Mammary epithelial cell (primary cell): ENCODE measurements at regions of chr2 and their contacts with region 1.

Region 1: DNA sequence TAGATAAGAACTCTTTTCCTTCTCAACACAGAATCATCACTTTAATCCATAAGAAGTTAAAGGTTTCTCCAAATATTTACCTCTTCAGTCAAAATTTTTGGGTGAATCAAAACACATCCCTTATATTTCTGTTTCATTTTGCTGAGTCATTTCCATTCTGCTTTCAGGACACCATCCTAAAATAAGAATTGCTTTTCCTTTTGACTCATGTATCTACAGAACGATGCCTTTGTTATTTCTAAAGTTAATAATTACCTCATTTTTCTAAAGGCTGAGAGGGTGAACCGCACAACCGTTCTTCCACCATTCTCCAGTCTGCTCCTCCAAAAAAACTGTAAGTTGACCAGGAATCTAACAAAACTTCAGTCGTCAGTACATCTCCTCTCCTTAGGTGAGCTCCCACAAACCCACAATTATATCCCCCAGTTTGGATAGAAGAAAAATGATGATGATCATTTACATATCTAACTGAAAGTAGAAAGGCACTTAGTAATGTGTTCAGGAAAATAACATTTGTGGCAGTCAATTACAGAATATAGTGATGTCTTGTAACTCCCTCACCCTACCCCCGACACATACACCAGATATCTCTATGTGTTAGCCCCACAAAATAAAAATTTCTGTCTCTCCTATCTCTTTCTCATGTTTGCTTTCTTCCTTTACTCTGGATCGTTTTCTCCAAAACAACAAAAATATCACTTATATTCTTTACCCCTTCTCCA is 162.5 kb downstream of the RAD51AP2 start:
- DNase-seq: no peak
- H3K4me3 ChIP-seq: no peak overlapping the region
- H3K27ac ChIP-seq: no peak overlapping the region
- H3K4me1 ChIP-seq: no peaks in the 10 kb centered on the region
- H3K27me3 ChIP-seq: no peaks in the 10 kb centered on the region
- CTCF ChIP-seq: no peak

Region 2: DNA sequence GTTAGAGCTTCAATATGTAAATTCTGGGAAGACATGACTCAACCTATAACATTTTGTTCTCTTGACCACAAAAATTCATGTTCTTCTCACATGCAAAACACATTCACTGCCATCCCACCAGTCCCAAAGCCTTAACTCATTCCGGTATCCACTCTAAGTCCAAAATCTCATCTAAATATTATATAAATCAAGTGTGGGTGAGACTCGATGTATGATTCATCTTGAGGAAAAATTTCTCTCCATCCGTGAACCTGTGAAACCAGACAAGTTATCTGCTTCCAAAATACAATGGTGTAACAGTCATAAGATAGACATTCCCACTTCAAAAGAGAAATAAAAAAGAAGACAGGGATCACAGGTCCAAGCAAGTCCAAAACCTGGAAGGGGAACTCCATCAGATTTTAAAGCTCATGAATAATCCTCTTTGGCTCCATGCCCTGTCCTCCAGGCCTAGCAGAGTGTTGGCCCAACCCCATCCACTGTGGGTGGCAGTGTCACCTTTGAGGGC is 61.2 kb after region 1 on chr2:
- CTCF ChIA-PET with region 1: no interaction called
- dilution Hi-C with region 1: no loop called
- in situ Hi-C with region 1: no loop called
- intact Hi-C with region 1: no loop called
- DNase-seq: peak; percentile 99
- H3K4me3 ChIP-seq: no peak overlapping the region
- H3K27ac ChIP-seq: peak overlapping the region; percentile 89
- H3K4me1 ChIP-seq: peaks cover 21% of the 10 kb centered on the region
- H3K27me3 ChIP-seq: no peaks in the 10 kb centered on the region
- CTCF ChIP-seq: no peak

Region 3: GRCh38 chr2:17460371-17461086 is 104.8 kb after region 1 on chr2:
- CTCF ChIA-PET with region 1: no interaction called
- dilution Hi-C with region 1: loop called (anchors 5 kb)
- in situ Hi-C with region 1: no loop called
- intact Hi-C with region 1: no loop called
- DNase-seq: no peak
- H3K4me3 ChIP-seq: no peak overlapping the region
- H3K27ac ChIP-seq: no peak overlapping the region
- H3K4me1 ChIP-seq: peaks cover 3% of the 10 kb centered on the region
- H3K27me3 ChIP-seq: no peaks in the 10 kb centered on the region
- CTCF ChIP-seq: no peak